ENCODE measurements at regions of chrX and their contacts with region 1.

Region 1: DNA sequence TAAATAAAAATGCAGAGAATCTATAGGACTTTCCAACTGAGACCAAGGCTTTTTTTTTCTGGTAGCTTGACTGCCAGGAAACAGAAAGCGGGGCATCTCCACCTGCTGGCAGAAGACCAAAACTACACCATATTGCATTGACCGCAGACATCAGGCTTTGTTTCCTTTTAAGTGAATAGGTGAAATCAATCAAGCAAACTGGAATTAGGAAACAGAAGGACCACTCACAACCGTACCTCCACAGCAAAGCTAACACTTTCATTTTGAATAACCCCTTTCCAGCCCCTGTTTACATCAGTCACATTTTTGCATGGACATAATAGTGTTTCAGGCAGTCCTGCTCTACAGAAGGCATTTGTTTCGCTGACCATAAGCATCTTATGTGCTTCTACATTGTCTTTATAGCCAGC is 218.2 kb downstream of the IDS start:
- DNase-seq: peak; percentile 34
- CTCF ChIP-seq: peak; percentile 54

Region 2: GRCh38 chrX:149274516-149275105 is 12.3 kb before region 1 on chrX:
- CTCF ChIA-PET with region 1: interaction called, 14 read pairs
- POLR2A ChIA-PET with region 1: no interaction called
- DNase-seq: no peak
- CTCF ChIP-seq: no peak

Region 3: DNA sequence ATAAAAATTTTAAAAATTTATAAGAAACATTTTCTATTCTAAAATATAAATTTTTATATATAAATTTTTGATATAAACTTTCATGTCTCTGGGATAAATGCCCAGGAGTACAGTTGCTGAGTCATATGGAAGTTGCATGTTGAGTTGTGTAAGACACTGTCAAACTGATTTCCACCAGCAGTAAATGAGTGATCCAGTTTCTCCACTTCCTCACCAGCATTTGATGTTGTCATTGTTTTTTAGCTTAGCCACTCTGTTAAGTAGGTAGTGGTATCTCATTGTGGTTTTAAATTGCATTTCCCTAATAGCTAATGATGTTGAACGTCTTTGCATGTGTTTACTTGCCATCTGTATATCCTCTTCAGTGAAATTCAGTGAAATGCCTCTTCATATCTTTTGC is 1142.6 kb after region 1 on chrX:
- CTCF ChIA-PET with region 1: no interaction called
- POLR2A ChIA-PET with region 1: no interaction called
- DNase-seq: no peak
- CTCF ChIP-seq: no peak

Measured in GM10248 (cell line).